ENCODE measurements at regions of chr10 and their contacts with region 1.

Region 1: GRCh38 chr10:29998142-29998808 is 61.1 kb downstream of the JCAD start:
- DNase-seq: peak; percentile 71 to 79 (median 77)
- H3K4me3 ChIP-seq: no peak overlapping the region
- H3K27ac ChIP-seq: no peak overlapping the region
- H3K4me1 ChIP-seq: no peaks in the 10 kb centered on the region
- H3K27me3 ChIP-seq: no peaks in the 10 kb centered on the region
- CTCF ChIP-seq: peak; percentile 87 to 95 (median 95)
- EP300 ChIP-seq: no peak
- POLR2A ChIP-seq: no peak

Region 2: DNA sequence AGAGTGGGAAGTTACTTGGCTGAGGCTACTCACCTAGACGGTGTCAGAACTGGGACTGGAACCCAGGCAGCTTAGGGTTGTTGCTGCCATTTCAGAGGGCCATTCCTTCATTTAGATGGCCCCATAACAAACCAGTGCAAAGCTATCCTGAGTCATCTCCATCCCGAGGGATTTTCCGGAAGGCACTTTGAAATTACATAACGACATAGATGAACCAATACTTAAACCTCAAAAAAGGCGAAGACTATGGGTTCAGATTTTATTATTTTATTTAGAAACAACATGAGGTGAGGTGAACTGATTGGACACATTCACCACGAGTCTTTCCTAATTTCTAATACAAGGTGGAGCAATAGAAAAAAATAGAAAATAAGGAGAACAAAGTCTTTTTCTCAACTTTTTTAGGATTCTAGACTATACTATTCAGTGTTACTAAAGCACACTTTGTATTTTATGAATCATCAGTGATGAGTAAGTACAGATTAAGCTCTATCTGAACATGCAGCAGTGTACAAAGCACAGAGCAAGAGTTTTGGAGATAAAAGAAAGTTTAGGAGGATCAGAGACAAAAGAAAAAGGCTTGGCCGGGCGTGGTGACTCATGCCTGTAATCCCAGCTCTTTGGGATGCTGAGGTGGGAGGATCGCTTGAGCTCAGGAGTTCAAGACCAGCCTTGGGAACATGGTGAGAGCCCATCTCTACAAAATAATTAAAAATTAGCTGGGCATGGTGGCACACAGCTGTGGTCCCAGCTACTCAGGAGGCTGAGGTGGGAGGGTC is 284.0 kb before region 1 on chr10:
- intact Hi-C with region 1: no loop called
- DNase-seq: peak in 2 of 5 donors; percentile 54 to 64
- H3K4me3 ChIP-seq: no peak overlapping the region
- H3K27ac ChIP-seq: no peak overlapping the region
- H3K4me1 ChIP-seq: peaks cover 4% of the 10 kb centered on the region
- H3K27me3 ChIP-seq: no peaks in the 10 kb centered on the region
- CTCF ChIP-seq: no peak
- EP300 ChIP-seq: no peak
- POLR2A ChIP-seq: no peak

Region 3: DNA sequence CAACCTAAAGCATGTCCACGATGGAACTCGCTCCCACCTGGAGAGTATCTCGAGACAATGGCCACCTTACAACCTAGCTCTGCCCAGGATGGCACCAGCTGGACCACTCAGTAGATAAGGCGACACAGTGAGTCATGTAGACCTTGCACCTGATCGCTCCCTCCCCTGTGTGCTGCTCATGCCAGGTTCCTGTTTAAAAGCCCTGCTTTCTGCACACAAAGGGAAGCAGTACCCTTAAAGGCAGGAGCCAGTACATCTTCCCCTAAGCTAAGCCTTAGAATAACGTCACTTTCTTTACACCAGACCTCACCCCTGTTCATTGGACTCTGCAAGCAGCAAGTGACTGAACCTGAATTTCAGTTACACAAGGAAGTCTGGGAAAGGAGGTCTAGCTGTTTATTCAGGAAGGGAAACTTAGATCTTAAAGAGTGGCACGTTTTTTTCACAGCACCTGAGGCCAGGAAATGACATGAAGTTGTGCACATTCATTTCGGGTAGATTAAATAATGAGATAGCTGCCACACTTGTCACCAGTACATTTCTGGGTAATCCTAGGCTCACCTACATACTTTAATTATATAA is 232.9 kb after region 1 on chr10:
- intact Hi-C with region 1: loop called in 1 of 4 experiments (anchors 10 kb)
- DNase-seq: no peak
- H3K4me3 ChIP-seq: no peak overlapping the region
- H3K27ac ChIP-seq: no peak overlapping the region
- H3K4me1 ChIP-seq: no peaks in the 10 kb centered on the region
- H3K27me3 ChIP-seq: no peaks in the 10 kb centered on the region
- CTCF ChIP-seq: no peak
- EP300 ChIP-seq: no peak
- POLR2A ChIP-seq: no peak

Region 4: DNA sequence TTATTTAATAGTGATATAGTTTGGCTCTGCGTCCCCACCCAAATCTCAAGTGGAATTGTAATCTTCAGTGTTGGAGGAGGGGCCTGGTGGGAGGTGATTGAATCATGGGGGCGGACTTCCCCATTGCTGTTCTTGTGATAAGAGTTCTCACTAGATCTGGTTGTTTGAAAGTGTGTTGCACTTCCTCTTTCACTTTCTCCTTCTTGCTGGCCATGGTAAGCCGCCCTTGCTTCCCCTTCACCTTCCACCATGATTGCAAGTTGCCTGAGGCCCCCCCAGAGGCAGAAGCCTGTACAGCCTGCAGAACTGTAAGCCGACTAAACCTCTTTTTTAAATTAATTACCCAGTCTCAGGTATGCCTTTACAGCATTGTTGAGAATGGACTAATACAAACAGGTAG is 249.4 kb after region 1 on chr10:
- intact Hi-C with region 1: loop called in 2 of 4 experiments (anchors 10 kb)
- DNase-seq: no peak
- H3K4me3 ChIP-seq: no peak overlapping the region
- H3K27ac ChIP-seq: no peak overlapping the region
- H3K4me1 ChIP-seq: no peaks in the 10 kb centered on the region
- H3K27me3 ChIP-seq: no peaks in the 10 kb centered on the region
- CTCF ChIP-seq: no peak
- EP300 ChIP-seq: no peak
- POLR2A ChIP-seq: no peak

Measured in ovary (tissue), 10 donors.